Ascending aorta (tissue), 2 donors: ENCODE measurements at regions of chr6 and their contacts with region 1.

Region 1: GRCh38 chr6:116371120-116371917 is 572 bp downstream of the DSE start:
- DNase-seq: peak; percentile 61 to 92
- H3K4me3 ChIP-seq: peak overlapping the region; percentile 77 to 86
- H3K27ac ChIP-seq: peak overlapping the region; percentile 94 to 96
- H3K4me1 ChIP-seq: peaks cover 0 to 7% of the 10 kb centered on the region in 2 donors
- H3K27me3 ChIP-seq: no peaks in the 10 kb centered on the region
- CTCF ChIP-seq: no peak

Region 2: GRCh38 chr6:116287689-116288282 is 83.5 kb before region 1 on chr6:
- intact Hi-C with region 1: loop called (anchors 2 kb)
- DNase-seq: no peak
- H3K4me3 ChIP-seq: no peak overlapping the region
- H3K27ac ChIP-seq: no peak overlapping the region
- H3K4me1 ChIP-seq: no peaks in the 10 kb centered on the region
- H3K27me3 ChIP-seq: no peaks in the 10 kb centered on the region
- CTCF ChIP-seq: peak; percentile 71 to 90 (median 87)

Region 3: DNA sequence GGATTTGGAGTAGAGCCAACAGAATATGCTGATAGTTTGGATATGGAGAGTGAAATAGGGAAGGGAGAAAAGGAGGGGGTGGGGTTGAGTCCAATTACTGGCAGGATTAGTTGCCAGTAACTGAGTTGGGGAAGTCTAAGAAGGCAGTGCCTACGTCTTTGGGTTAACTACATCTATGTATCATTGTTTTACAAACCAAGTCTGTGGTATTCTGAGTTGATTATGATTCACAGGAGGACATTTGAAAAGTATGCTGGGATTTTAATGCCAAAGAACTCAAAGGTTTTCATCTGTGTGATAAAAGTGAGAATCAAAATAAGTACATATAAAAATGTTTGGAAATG is 14.1 kb after region 1 on chr6:
- intact Hi-C with region 1: loop called (anchors 2 kb)
- DNase-seq: no peak
- H3K4me3 ChIP-seq: no peak overlapping the region
- H3K27ac ChIP-seq: peak overlapping the region; percentile 20 to 74
- H3K4me1 ChIP-seq: peaks cover 0 to 24% of the 10 kb centered on the region in 2 donors
- H3K27me3 ChIP-seq: no peaks in the 10 kb centered on the region
- CTCF ChIP-seq: no peak

Region 4: DNA sequence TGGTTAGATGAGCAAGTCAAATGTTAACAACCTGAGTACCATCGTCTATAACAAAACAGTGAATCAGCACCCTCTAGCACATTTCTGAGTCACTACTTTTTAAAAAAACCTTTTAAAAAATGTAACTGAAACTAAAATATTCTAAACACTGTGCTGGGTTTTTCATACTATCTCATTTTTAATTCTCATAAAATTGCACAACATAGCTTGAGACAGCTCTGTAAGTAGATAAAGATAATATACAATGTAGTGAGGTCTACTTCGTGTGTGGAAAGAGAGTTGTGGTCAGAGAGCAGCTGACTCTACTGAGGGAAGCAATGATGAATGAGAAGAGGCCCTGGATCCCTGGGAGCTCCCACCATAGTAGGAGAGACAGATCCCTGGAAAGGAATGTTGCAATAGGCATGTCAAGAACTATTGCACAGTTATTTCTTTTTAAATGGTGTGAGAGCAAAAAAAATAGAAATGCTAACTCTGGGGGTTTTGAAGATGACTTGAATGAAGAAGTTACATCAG is 76.2 kb after region 1 on chr6:
- intact Hi-C with region 1: loop called (anchors 5 kb)
- DNase-seq: peak in 1 of 2 donors; percentile 66
- H3K4me3 ChIP-seq: no peak overlapping the region
- H3K27ac ChIP-seq: no peak overlapping the region
- H3K4me1 ChIP-seq: peaks cover 0 to 6% of the 10 kb centered on the region in 2 donors
- H3K27me3 ChIP-seq: no peaks in the 10 kb centered on the region
- CTCF ChIP-seq: peak in 1 of 3 experiments; percentile 28

Region 5: GRCh38 chr6:116531675-116532570 is 160.6 kb after region 1 on chr6:
- intact Hi-C with region 1: loop called (anchors 5 kb)
- DNase-seq: peak in 1 of 2 donors; percentile 81
- H3K4me3 ChIP-seq: no peak overlapping the region
- H3K27ac ChIP-seq: no peak overlapping the region
- H3K4me1 ChIP-seq: peaks cover 0 to 2% of the 10 kb centered on the region in 2 donors
- H3K27me3 ChIP-seq: no peaks in the 10 kb centered on the region
- CTCF ChIP-seq: peak; percentile 68 to 75 (median 73)